ENCODE measurements at regions of chr10 and their contacts with region 1.

Region 1: DNA sequence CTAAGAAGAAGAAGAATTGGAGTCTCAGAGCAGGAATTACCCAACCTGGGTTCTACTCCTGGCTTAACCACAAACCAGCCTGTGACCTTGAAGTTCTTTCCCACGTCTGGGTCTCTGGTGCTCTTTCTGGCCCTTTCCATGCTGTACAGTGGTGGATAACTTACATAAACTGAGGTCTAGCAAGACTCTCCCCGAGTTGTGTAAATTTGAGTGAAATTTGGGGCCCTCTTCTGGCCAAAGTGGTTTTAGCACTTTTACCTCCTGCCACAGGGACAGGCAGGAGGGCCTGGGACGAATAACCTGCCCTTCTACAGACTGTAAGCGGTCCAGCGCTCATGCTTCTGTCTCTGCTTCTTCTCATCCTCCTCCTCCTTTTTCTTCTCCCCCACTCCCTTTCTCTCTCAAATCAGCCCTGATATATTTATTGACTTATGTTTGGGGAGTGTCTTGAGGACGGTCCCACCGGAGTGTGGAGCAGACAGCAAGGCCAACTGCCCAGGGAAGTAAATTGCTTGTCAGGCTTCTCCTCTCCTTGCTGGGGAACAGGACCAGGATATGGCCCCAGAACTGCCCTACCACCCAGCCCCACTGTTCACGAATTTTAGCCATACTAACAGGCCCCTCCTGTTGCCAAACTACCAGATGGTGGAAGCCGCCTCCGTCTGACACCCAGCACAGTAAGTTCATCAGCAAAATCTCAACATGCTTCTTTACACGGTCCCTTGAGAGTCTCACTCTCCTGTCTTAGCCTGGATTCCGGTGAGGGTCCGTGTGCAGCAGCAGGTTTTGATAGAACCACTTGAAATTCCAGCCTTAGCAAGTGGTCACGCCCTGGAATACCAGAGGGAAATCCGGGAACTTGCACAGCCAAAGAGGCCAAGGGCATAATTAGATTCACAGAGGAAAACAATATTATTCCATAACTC is 4.0 kb upstream of the SH3PXD2A start:
- DNase-seq: peak; percentile 69
- H3K4me3 ChIP-seq: no peak overlapping the region
- H3K27ac ChIP-seq: peak overlapping the region; percentile 22
- H3K4me1 ChIP-seq: peaks cover 45% of the 10 kb centered on the region
- H3K27me3 ChIP-seq: no peaks in the 10 kb centered on the region
- CTCF ChIP-seq: peak; percentile 64 to 69

Region 2: DNA sequence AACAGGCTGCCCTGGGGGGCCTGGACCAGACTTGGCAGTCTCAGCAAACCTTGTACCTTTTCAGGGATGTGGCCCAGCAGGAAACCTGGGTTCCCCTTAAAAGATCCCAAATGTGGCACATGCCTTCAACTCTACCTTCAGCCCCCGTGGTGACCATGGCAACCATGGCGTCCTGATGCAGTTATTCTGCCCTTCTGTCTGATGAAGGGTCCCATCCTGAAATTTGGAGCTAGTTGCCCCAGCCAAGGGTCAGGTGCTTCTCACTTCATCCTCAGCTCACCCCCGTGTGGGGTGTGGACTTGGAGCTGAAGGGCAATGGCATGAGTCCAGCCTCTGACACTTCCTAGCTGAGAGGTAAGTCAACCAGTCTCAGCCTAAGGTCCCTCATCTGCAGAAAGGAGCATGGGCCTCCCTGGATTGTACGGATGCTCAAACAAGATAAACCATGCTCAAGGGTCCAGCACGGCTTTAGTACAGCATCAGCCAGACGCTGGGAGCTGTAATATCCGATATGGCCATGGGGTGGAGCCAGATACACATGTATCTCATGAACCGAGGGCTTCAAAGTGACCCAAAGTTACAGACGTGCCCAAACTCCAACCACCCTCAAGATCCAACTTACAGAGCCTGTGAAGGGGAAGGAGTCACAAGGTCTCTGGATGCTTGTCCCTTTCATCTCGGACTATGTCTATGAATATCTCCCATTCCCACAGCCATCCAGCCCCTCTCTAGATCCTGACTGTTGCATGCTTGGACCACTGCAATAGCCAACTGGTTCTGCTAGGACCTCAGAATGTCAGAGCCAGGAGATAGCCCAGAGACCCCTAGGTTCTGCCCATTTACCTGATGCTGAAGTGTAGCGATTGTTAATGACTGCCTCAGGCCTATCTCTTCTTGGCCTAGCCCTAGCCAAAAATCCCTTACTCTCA is 146.6 kb before region 1 on chr10:
- CTCF ChIA-PET with region 1: interaction called, 3 read pairs
- dilution Hi-C with region 1: no loop called
- in situ Hi-C with region 1: loop called (anchors 5 to 10 kb)
- intact Hi-C with region 1: loop called (anchors 1 kb)
- DNase-seq: peak; percentile 74
- H3K4me3 ChIP-seq: no peak overlapping the region
- H3K27ac ChIP-seq: peak overlapping the region; percentile 76
- H3K4me1 ChIP-seq: peaks cover 85% of the 10 kb centered on the region
- H3K27me3 ChIP-seq: no peaks in the 10 kb centered on the region
- CTCF ChIP-seq: peak; percentile 72 to 89

Region 3: DNA sequence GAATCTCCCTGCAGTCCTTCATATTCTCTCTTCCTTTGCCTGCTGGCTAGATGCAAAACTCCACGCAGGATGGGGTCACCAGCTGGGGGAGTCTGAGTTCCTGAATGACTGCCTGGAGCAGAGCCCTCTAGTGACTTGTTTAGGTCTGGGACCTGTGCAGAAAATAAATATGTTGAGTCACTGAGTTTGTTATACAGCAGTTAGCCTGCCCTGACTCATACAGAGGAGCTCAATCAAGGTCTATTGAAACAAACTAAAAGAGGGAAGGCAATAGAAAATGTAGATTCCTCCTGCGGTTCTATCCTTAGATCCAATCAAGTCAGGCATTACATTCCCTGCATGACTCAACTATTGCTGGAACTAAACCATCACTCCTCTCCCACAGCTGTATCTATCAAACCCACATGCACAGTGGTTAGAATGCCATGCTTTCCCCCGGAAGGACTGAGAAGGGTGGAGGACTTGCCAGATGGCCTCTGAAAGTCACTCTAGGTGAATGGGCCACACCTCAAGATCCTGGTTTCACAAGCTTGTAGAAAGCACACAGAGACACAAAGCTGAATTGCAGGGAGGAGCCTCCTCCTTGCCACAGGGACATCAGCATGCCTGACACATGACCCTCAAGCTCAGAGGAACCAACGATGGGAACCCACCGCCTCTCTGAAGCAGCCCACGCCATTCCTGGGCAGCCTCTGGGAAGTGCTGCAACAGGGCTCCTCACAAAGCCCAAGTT is 77.9 kb before region 1 on chr10:
- CTCF ChIA-PET with region 1: no interaction called
- dilution Hi-C with region 1: no loop called
- in situ Hi-C with region 1: no loop called
- intact Hi-C with region 1: loop called (anchors 1 kb)
- DNase-seq: peak; percentile 99
- H3K4me3 ChIP-seq: no peak overlapping the region
- H3K27ac ChIP-seq: peak overlapping the region; percentile 90
- H3K4me1 ChIP-seq: peaks cover 77% of the 10 kb centered on the region
- H3K27me3 ChIP-seq: no peaks in the 10 kb centered on the region
- CTCF ChIP-seq: peak; percentile 66 to 68

Region 4: GRCh38 chr10:103800789-103801540 is 58.5 kb before region 1 on chr10:
- CTCF ChIA-PET with region 1: no interaction called
- dilution Hi-C with region 1: no loop called
- in situ Hi-C with region 1: no loop called
- intact Hi-C with region 1: loop called (anchors 5 kb)
- DNase-seq: peak; percentile 98
- H3K4me3 ChIP-seq: no peak overlapping the region
- H3K27ac ChIP-seq: peak overlapping the region; percentile 92
- H3K4me1 ChIP-seq: peaks cover 72% of the 10 kb centered on the region
- H3K27me3 ChIP-seq: no peaks in the 10 kb centered on the region
- CTCF ChIP-seq: no peak

Region 5: DNA sequence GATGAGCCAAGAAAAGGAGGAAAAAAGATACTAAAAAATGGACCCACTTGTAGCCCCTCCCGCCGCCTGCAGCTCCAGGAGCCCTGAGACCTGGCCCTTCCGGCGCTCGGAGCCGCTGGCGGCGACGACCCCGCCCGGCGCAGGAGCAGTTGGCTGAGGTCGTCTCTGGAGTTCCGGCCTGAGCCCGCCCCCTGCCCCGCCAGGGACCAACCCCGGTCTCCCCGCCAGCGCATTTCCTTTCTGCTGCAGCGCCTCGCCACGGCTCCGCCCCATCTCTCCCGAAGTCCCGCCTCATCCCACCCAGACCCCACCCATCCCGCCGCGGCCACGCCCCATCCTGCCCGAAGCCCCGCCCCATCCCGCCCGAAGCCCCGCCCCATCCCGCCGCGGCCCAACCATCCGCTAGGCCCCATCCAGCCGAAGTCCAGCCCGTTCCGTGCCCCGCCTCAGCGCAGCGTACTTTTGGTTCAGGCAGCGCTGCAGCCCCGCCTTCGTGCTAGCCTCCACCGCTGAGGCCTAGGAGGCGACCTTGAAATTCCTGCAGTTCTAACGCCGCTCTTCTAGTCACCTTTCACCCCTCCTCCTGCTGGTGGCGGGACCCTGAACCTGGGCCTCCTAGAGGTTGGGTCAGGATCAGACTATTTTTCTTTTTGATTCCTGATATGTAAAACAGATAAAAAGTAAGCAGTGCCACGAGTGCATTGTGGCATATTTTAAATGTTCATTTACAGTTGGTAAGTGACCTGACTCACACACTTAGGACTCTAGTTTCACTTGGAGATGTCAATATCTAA is 58.8 kb after region 1 on chr10 and contains the start of gene STN1:
- CTCF ChIA-PET with region 1: interaction called, 15 read pairs
- dilution Hi-C with region 1: no loop called
- in situ Hi-C with region 1: no loop called
- intact Hi-C with region 1: no loop called
- DNase-seq: peak; percentile 92
- H3K4me3 ChIP-seq: peak within 1 kb of the TSS; percentile 63 to 67 (median 64)
- H3K27ac ChIP-seq: peak within 1 kb of the TSS; percentile 83
- H3K4me1 ChIP-seq: peaks cover 31% of the 10 kb centered on the region
- H3K27me3 ChIP-seq: no peaks in the 10 kb centered on the region
- CTCF ChIP-seq: no peak
- total RNA-seq, gene STN1: 42.6 to 65.0 TPM

Measured in mammary epithelial cell (primary cell).